A549 (cell line): ENCODE measurements at regions of chr16 and their contacts with region 1.

Region 1: GRCh38 chr16:66406534-66407221 is 20.4 kb upstream of the BEAN1 start:
- DNase-seq: peak; percentile 83 to 92
- ATAC-seq: peak; percentile 87 to 94
- H3K4me3 ChIP-seq: peak overlapping the region; percentile 61
- H3K27ac ChIP-seq: peak overlapping the region; percentile 86 to 88
- H3K4me1 ChIP-seq: peaks cover 27% of the 10 kb centered on the region
- CTCF ChIP-seq: peak; percentile 87
- EP300 ChIP-seq: no peak
- POLR2A ChIP-seq: peak; percentile 37
- RAD21 ChIP-seq: peak; percentile 98

Region 2: GRCh38 chr16:65984296-65984695 is 422.4 kb before region 1 on chr16:
- CTCF ChIA-PET with region 1: no interaction called
- POLR2A ChIA-PET with region 1: no interaction called
- DNase-seq: no peak
- ATAC-seq: no peak
- H3K4me3 ChIP-seq: no peak overlapping the region
- H3K27ac ChIP-seq: no peak overlapping the region
- H3K4me1 ChIP-seq: no peaks in the 10 kb centered on the region
- CTCF ChIP-seq: no peak
- EP300 ChIP-seq: no peak
- POLR2A ChIP-seq: no peak
- RAD21 ChIP-seq: no peak

Region 3: DNA sequence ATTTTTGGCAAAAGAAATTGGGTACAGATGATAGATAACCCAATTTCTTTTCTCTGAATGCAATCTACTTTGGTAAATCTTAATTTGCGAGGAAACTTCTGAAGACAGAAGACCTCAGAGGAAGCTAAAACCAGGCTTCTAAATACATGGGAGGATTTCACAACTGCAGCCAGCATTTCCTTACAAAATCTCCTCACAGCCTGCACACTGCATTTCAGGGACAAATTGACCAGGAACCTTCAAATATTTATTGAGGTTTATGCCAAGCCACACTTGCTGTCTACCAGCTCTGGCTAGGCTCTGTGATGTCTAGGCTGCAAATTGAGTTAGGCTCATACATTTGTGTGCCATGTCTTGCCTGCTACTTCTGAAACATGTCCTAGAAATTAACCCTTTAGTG is 207.5 kb before region 1 on chr16:
- CTCF ChIA-PET with region 1: no interaction called
- POLR2A ChIA-PET with region 1: no interaction called
- DNase-seq: no peak
- ATAC-seq: no peak
- H3K4me3 ChIP-seq: no peak overlapping the region
- H3K27ac ChIP-seq: no peak overlapping the region
- H3K4me1 ChIP-seq: no peaks in the 10 kb centered on the region
- CTCF ChIP-seq: no peak
- EP300 ChIP-seq: no peak
- POLR2A ChIP-seq: no peak
- RAD21 ChIP-seq: no peak

Region 4: GRCh38 chr16:66335704-66336329 is 70.9 kb before region 1 on chr16:
- CTCF ChIA-PET with region 1: no interaction called
- POLR2A ChIA-PET with region 1: no interaction called
- DNase-seq: no peak
- ATAC-seq: no peak
- H3K4me3 ChIP-seq: no peak overlapping the region
- H3K27ac ChIP-seq: no peak overlapping the region
- H3K4me1 ChIP-seq: no peaks in the 10 kb centered on the region
- CTCF ChIP-seq: no peak
- EP300 ChIP-seq: no peak
- POLR2A ChIP-seq: no peak
- RAD21 ChIP-seq: no peak

Region 5: GRCh38 chr16:66444049-66444481 is 37.4 kb after region 1 on chr16:
- CTCF ChIA-PET with region 1: interaction called, 24 read pairs
- POLR2A ChIA-PET with region 1: no interaction called
- DNase-seq: peak in 1 of 2 experiments; percentile 26
- ATAC-seq: peak; percentile 83 to 84
- H3K4me3 ChIP-seq: no peak overlapping the region
- H3K27ac ChIP-seq: no peak overlapping the region
- H3K4me1 ChIP-seq: no peaks in the 10 kb centered on the region
- CTCF ChIP-seq: no peak
- EP300 ChIP-seq: no peak
- POLR2A ChIP-seq: no peak
- RAD21 ChIP-seq: no peak

Region 6: DNA sequence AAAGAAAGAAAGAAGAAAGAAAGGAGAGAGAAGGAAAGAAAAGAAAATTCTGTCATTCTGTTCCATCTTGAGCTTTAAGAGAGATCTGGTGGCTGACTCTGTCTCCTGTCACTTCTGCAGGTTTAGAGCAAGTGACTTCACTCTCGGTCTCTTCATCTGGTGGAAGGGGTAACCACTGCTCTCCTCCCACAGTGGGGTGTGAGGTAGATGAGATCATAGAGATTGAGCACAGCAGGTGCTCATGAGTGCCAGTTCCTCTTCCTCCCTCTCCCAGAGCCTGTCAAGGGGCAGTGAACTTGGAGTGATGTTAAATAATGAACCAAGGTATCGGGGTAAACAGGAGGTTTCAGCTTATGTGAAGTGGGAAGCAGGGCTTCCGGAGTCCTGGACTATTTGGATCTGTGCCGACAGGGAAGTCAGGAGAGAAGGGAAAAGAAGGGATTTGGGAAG is 68.1 kb after region 1 on chr16:
- CTCF ChIA-PET with region 1: interaction called, 185 read pairs
- POLR2A ChIA-PET with region 1: interaction called, 3 read pairs
- DNase-seq: no peak
- ATAC-seq: no peak
- H3K4me3 ChIP-seq: no peak overlapping the region
- H3K27ac ChIP-seq: peak overlapping the region in 1 of 2 experiments; percentile 32; a peak in 2 of 6 replicates
- H3K4me1 ChIP-seq: peaks cover 18% of the 10 kb centered on the region
- CTCF ChIP-seq: no peak
- EP300 ChIP-seq: no peak
- POLR2A ChIP-seq: no peak
- RAD21 ChIP-seq: no peak

Region 7: DNA sequence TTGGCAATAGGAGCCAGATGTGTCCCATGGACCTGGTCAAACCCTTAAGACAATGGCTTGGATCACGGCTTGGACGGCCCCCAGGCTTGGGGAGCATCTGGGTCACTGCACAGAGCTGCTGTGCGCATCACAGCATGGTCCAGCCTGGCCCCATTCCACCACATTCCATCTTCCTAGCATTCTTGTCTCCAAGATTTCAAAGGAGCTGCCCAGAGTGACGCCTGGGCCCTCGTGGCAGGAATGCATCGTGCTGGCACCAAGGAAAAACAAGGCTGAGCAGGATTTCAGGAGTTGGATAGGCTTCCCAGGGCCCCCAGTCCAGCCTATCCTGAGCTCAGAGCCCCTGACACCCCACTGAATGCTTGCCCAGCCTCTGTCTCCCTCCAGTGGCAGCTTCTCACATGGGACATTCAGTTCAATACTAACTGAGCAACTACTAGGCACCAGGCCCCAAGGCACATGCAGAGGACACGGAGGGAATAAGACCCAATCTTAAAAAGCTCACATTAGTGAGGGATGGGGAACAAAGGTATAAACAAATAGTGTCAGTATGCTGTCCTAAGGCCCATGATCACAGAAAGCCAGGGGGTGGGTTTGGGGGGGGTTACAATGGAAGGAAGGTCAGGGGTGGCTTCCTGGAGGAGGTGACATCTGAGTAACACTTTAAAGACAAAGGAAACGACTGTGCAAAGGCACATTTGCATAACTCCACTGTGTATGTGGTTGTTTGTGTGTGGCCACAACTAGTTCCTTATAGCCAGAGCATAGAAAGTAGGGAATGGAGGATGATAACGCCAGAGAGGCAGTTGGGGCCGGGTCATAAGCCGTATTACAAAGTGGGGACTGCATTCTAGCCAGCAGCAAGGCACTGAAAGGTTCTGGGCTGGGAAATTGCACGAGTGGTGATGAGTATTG is 109.2 kb after region 1 on chr16:
- CTCF ChIA-PET with region 1: interaction called, 68 read pairs
- POLR2A ChIA-PET with region 1: no interaction called
- DNase-seq: peak; percentile 44 to 81
- ATAC-seq: peak; percentile 30 to 58
- H3K4me3 ChIP-seq: peak overlapping the region; percentile 18; the same call in 1 of the 3 replicates
- H3K27ac ChIP-seq: peak overlapping the region; percentile 92 to 95
- H3K4me1 ChIP-seq: peaks cover 64% of the 10 kb centered on the region
- CTCF ChIP-seq: peak; percentile 70
- EP300 ChIP-seq: peak in 1 of 2 experiments; percentile 15; a peak in 1 of 5 replicates
- POLR2A ChIP-seq: no peak
- RAD21 ChIP-seq: peak; percentile 81 to 90

Region 8: DNA sequence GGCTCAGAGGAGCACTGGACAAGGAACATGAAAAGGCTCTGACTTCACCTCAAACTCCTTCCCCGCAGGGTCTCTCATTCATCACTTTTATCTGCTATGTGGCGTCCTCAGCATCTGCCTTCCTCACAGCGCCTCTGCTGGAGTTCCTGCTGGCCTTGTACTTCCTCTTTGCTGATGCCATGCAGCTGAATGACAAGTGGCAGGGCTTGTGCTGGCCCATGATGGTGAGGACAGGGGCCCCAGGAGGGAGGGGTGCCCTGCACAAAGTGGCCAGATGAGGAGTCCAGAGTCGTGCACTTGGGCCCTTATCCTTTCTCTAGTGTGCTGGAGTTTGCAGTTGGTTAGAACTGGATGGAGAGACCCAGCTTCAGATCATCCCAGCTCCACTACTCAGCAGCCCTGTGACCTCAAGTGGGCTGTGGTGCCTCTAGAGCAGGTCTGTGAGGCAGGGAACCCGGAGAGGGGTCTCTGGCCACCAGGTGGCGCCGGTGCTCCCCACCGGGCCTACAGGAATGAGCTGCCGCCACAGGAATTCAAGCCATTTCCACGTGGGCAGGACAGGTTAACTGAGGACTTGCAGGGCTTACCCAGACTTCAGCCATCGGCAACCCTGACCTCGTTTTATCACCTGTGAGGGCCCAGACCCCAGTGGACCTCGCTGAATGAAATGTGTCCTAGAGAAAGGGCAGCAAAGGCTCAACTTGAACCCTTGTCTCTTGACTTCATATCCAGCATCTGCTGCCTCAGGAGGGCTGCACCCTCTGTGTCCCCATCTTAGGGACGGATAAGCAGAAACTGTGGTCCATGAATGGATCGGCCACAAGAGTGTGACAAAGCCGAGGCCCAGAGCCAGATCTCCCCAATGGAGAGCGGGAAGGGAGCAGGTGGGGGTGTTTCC is 201.8 kb after region 1 on chr16:
- CTCF ChIA-PET with region 1: interaction called, 38 read pairs
- POLR2A ChIA-PET with region 1: interaction called, 7 read pairs
- DNase-seq: peak; percentile 85 to 94
- ATAC-seq: peak; percentile 56 to 76
- H3K4me3 ChIP-seq: no peak overlapping the region
- H3K27ac ChIP-seq: peak overlapping the region; percentile 19 to 86; a peak in 3 of 6 replicates
- H3K4me1 ChIP-seq: peaks cover 28% of the 10 kb centered on the region
- CTCF ChIP-seq: peak; percentile 90
- EP300 ChIP-seq: no peak
- POLR2A ChIP-seq: no peak
- RAD21 ChIP-seq: peak; percentile 67 to 70

Region 9: DNA sequence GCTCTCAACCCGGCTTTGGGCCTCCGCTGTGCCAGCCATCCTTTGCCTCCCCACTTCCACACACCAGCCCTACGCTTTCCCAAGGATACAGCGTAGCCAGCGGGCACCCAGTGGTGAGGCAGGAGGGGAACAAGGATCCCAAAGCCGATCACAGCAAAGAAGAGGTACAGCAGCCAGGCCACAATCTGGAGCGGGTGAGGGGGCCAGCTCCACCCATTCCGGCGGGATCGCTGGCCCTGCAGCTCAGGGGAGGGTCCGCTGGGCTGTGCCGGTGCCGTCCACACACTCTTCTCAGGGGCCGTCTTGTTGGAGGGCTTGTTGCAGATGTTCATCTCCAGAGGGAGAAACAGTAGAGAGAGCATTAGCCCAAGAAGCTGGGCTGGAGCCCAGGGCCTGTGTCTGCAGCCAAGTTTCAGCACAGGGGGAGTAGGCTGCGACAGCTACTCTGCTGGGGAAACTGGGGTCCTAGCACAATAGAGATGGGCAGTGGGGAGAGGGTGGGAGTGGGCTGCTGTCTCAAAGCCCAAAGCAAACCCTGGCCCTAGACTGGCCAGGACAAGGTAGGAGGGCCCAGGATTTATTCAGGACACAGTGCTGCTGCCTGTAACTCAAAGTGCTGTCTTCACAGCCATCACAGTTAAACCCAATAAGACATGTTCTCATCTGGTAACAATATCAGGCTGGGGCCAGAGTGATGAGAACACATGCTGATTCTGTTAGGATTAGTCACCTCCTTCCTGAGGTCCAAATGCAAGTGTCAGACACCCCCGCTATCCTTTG is 999.6 kb after region 1 on chr16:
- CTCF ChIA-PET with region 1: no interaction called
- POLR2A ChIA-PET with region 1: no interaction called
- DNase-seq: no peak
- ATAC-seq: peak in 1 of 2 experiments; percentile 44; a peak in 3 of 6 replicates
- H3K4me3 ChIP-seq: no peak overlapping the region
- H3K27ac ChIP-seq: no peak overlapping the region
- H3K4me1 ChIP-seq: peaks cover 11% of the 10 kb centered on the region; the same call in 2 of the 3 replicates
- CTCF ChIP-seq: no peak
- EP300 ChIP-seq: no peak
- POLR2A ChIP-seq: no peak
- RAD21 ChIP-seq: no peak